Mammary epithelial cell (primary cell): ENCODE measurements at regions of chr10 and their contacts with region 1.

Region 1: DNA sequence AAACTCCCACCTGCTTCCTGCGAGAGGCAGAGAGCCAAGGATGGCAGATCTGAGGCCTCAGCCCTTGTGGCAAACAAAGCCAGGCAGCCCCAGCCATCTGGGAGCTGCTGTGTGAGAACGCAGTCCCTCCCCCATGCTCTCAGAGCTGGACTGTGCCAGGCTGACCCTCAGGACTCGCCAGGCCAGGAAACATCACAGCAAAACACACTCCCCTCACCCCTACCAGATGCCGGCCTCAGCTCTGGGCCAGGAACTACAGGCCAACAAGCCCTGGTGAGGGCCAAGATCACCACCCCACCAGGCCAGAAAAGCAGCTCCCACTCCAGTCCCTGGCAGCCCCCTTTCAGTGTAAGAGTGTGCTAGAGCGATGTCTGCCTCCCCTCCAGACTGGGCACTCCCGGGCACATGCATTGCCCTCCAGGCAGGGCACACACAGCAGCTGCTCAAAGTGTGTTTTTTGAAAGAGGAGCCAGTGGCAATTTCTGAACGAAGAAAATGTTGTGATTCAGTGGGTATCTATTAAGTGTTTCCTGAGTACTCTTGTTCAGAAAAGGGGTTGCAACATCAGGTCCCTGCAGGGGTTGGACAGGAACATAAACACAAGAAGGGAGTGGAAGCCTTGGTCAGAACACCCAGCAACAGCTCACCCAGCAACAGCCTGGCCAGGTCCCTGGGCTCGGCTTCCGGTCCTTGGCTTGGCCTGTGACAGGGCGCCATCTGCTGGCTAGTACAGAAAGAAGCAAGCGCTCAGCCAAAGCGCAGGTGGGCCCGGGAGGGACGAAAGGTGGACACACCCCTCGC is 18.3 kb downstream of the LRRC20 start:
- DNase-seq: peak; percentile 95
- H3K4me3 ChIP-seq: peak overlapping the region in 1 of 3 experiments; percentile 21
- H3K27ac ChIP-seq: peak overlapping the region; percentile 75
- H3K4me1 ChIP-seq: peaks cover 14% of the 10 kb centered on the region
- H3K27me3 ChIP-seq: no peaks in the 10 kb centered on the region
- CTCF ChIP-seq: peak; percentile 66 to 94

Region 2: GRCh38 chr10:69968830-69969229 is 395.3 kb before region 1 on chr10:
- CTCF ChIA-PET with region 1: interaction called, 4 read pairs
- dilution Hi-C with region 1: no loop called
- in situ Hi-C with region 1: no loop called
- intact Hi-C with region 1: loop called (anchors 1 kb)
- DNase-seq: peak; percentile 32
- H3K4me3 ChIP-seq: no peak overlapping the region
- H3K27ac ChIP-seq: no peak overlapping the region
- H3K4me1 ChIP-seq: peaks cover 4% of the 10 kb centered on the region
- H3K27me3 ChIP-seq: peaks cover 3% of the 10 kb centered on the region
- CTCF ChIP-seq: peak; percentile 29 to 60

Region 3: DNA sequence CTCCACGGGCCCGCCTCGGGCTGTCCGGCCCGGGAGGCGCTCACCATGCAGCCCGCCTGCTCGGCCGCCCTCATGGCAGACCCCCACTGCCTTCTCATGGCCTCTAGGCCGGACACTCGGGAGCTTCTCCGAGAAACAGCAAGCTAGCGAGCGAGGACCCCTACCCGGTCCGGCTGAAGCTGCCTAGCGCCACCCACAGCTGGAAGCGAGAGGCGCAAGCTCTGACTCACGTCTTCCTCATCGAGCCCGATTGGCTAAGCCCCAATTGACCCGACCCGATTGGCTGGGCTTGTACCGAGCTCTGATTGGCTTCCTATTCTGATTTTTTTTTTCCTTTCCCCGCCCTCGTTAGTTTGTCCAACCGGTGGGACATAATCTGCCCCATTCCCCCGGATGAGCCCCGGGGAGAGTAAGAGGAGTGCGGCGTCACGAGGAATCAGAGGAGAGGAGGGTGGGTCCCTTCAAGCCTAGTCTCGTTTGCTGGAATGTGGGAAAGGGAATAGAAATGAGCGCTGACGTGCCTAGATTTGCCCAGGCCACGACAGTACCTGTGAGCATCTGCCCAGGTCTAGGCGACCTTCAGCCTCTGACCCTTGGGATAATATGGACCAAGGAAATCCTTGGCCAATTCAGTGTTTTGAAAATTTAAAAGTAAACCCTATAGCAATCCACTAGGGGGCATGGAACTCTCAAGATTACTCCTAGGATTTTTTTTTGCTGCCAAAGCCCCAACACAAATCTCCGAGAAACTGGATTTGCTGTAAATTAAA is 217.5 kb before region 1 on chr10 and contains the start of gene TYSND1:
- CTCF ChIA-PET with region 1: no interaction called
- dilution Hi-C with region 1: loop called (anchors 10 kb)
- in situ Hi-C with region 1: no loop called
- intact Hi-C with region 1: loop called (anchors 1 kb)
- DNase-seq: peak; percentile 99
- H3K4me3 ChIP-seq: peak within 1 kb of the TSS; percentile 74 to 86 (median 79)
- H3K27ac ChIP-seq: peak within 1 kb of the TSS; percentile 82
- H3K4me1 ChIP-seq: peaks cover 18% of the 10 kb centered on the region
- H3K27me3 ChIP-seq: no peaks in the 10 kb centered on the region
- CTCF ChIP-seq: peak; percentile 63 to 88
- total RNA-seq, gene TYSND1: 21.7 to 30.3 TPM

Region 4: GRCh38 chr10:70221030-70221429 is 143.1 kb before region 1 on chr10:
- CTCF ChIA-PET with region 1: interaction called, 58 read pairs
- dilution Hi-C with region 1: no loop called
- in situ Hi-C with region 1: loop called (anchors 5 to 10 kb)
- intact Hi-C with region 1: loop called (anchors 1 kb)
- DNase-seq: no peak
- H3K4me3 ChIP-seq: no peak overlapping the region
- H3K27ac ChIP-seq: peak overlapping the region; percentile 42
- H3K4me1 ChIP-seq: peaks cover 22% of the 10 kb centered on the region
- H3K27me3 ChIP-seq: no peaks in the 10 kb centered on the region
- CTCF ChIP-seq: no peak

Region 5: GRCh38 chr10:70289739-70290138 is 74.4 kb before region 1 on chr10:
- CTCF ChIA-PET with region 1: no interaction called
- dilution Hi-C with region 1: loop called (anchors 10 kb)
- in situ Hi-C with region 1: no loop called
- intact Hi-C with region 1: loop called (anchors 2 kb)
- DNase-seq: no peak
- H3K4me3 ChIP-seq: no peak overlapping the region
- H3K27ac ChIP-seq: no peak overlapping the region
- H3K4me1 ChIP-seq: peaks cover 5% of the 10 kb centered on the region
- H3K27me3 ChIP-seq: no peaks in the 10 kb centered on the region
- CTCF ChIP-seq: no peak

Region 6: GRCh38 chr10:70404036-70404786 is 40.0 kb after region 1 on chr10 and contains the start of gene EIF4EBP2:
- CTCF ChIA-PET with region 1: no interaction called
- dilution Hi-C with region 1: no loop called
- in situ Hi-C with region 1: no loop called
- intact Hi-C with region 1: no loop called
- DNase-seq: peak; percentile 96
- H3K4me3 ChIP-seq: peak within 1 kb of the TSS; percentile 69 to 81 (median 72)
- H3K27ac ChIP-seq: peak within 1 kb of the TSS; percentile 67
- H3K4me1 ChIP-seq: peaks cover 15% of the 10 kb centered on the region
- H3K27me3 ChIP-seq: no peaks in the 10 kb centered on the region
- CTCF ChIP-seq: no peak
- total RNA-seq, gene EIF4EBP2: 34.7 to 47.5 TPM

Region 7: GRCh38 chr10:70584909-70585544 is 220.9 kb after region 1 on chr10:
- CTCF ChIA-PET with region 1: no interaction called
- dilution Hi-C with region 1: no loop called
- in situ Hi-C with region 1: no loop called
- intact Hi-C with region 1: no loop called
- DNase-seq: no peak
- H3K4me3 ChIP-seq: no peak overlapping the region
- H3K27ac ChIP-seq: no peak overlapping the region
- H3K4me1 ChIP-seq: no peaks in the 10 kb centered on the region
- H3K27me3 ChIP-seq: peaks cover 13% of the 10 kb centered on the region
- CTCF ChIP-seq: no peak